Activated CD4-positive, alpha-beta T cell treated with anti-CD3 and anti-CD28 coated beads, Interleukin-2, amount 10 ng/mL, durations not matched to agents 7 days and 5 days (primary cell): ENCODE measurements at regions of chr2 and their contacts with region 1.

Region 1: GRCh38 chr2:221374234-221374633 is 197.9 kb downstream of the EPHA4 start:
- DNase-seq: no peak
- H3K4me3 Mint-ChIP-seq: no peak overlapping the region
- H3K27ac Mint-ChIP-seq: no peak overlapping the region
- H3K4me1 Mint-ChIP-seq: no peaks in the 10 kb centered on the region
- H3K27me3 Mint-ChIP-seq: no peaks in the 10 kb centered on the region

Region 2: DNA sequence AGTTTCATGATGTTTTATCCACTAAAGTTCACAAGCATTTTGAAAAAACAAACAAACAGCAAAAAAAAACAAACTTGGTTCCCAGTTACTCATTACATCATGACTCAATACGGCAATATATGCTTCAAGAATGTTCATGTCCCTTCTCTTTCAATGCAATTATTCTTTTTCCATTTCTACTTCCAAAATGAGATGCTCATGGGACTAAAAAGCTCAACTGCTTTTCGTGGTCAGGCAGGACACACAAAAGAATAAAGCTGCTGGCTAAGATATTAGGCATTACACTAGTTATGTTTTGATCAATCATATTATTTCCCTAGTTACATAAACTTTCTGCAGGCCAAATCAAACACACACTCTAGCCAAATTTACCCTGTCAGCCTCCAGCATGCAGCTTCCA is 103.4 kb before region 1 on chr2:
- CTCF ChIA-PET with region 1: no interaction called
- POLR2A ChIA-PET with region 1: interaction called, 10 read pairs
- DNase-seq: no peak
- H3K4me3 Mint-ChIP-seq: no peak overlapping the region
- H3K27ac Mint-ChIP-seq: no peak overlapping the region
- H3K4me1 Mint-ChIP-seq: no peaks in the 10 kb centered on the region
- H3K27me3 Mint-ChIP-seq: no peaks in the 10 kb centered on the region